HCT116 (cell line): ENCODE measurements at regions of chr15 and their contacts with region 1.

Region 1: DNA sequence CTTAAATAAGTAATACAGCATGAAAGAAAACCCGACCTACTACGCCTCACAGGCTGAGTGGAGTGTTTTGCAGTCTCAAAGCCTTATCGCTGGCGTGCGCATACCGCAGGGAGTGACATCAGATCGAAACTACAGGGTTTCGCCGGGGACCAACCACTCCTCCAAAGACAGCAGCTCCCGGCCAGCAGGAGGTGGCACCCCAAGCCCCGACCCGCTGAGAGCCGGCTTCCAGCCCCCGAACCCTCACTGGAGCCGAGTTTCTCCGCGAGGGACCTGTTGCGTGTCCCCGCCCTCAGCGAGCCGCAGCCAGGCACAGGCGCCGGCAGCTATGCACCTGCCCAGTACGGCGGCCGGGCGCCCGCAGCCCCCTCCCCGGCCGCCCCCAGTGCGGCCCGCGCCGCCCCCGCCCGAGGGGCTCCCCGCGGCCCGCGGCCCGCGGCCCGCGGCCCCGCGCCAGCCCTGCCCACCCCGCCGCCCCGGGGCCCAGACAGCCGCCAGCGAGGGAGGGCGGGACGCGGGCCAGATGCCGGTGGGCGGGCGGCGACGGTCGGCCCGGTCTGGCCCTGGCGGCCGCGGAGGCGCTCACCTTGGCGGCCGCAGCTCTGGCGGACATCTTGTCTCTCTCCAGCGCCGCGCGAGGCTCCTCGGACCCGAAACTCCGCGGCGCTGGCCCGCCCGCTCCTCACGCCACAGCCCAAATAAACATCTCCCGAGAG is 694 bp downstream of the TJP1 start:
- DNase-seq: peak; percentile 70
- ATAC-seq: peak; percentile 66
- H3K4me3 ChIP-seq: peak overlapping the region; percentile 63 to 79
- H3K27ac ChIP-seq: peak overlapping the region; percentile 93
- H3K4me1 ChIP-seq: peaks cover 16 to 31% of the 10 kb centered on the region in 2 experiments
- H3K27me3 ChIP-seq: no peaks in the 10 kb centered on the region
- CTCF ChIP-seq: peak in 1 of 3 experiments; percentile 12; a peak in 2 of 6 replicates
- POLR2A ChIP-seq: no peak
- RAD21 ChIP-seq: no peak

Region 2: GRCh38 chr15:29704950-29705597 is 116.5 kb before region 1 on chr15:
- CTCF ChIA-PET with region 1: no interaction called
- POLR2A ChIA-PET with region 1: no interaction called
- RAD21 ChIA-PET with region 1: no interaction called
- intact Hi-C with region 1: no loop called
- DNase-seq: no peak
- ATAC-seq: no peak
- H3K4me3 ChIP-seq: no peak overlapping the region
- H3K27ac ChIP-seq: no peak overlapping the region
- H3K4me1 ChIP-seq: no peaks in the 10 kb centered on the region
- H3K27me3 ChIP-seq: no peaks in the 10 kb centered on the region
- CTCF ChIP-seq: no peak
- POLR2A ChIP-seq: no peak
- RAD21 ChIP-seq: no peak

Region 3: DNA sequence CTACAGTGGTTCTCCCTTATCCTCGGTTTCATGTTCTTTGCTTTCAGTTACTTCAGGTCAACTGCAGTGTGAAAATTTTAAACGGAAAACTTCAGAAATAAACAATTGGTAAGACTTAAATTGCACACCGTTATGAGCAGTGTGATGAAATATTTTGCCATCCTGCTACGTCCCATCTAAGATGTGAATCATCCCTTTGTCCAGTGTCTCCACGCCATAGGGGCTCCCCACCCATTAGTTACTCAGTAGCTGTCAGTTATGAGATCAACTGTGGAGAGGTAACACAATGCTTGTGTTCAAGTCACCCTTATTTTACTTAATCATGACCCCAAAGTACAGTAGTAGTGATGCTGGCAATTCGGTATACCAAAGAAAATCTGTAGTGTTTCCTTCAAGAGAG is 46.7 kb before region 1 on chr15:
- CTCF ChIA-PET with region 1: no interaction called
- POLR2A ChIA-PET with region 1: no interaction called
- RAD21 ChIA-PET with region 1: no interaction called
- intact Hi-C with region 1: loop called (anchors 1 kb)
- DNase-seq: peak; percentile 54
- ATAC-seq: peak; percentile 79
- H3K4me3 ChIP-seq: no peak overlapping the region
- H3K27ac ChIP-seq: no peak overlapping the region
- H3K4me1 ChIP-seq: peaks cover 3 to 26% of the 10 kb centered on the region in 2 experiments; a peak in 3 of 4 replicates
- H3K27me3 ChIP-seq: no peaks in the 10 kb centered on the region
- CTCF ChIP-seq: no peak
- POLR2A ChIP-seq: no peak
- RAD21 ChIP-seq: no peak

Region 4: DNA sequence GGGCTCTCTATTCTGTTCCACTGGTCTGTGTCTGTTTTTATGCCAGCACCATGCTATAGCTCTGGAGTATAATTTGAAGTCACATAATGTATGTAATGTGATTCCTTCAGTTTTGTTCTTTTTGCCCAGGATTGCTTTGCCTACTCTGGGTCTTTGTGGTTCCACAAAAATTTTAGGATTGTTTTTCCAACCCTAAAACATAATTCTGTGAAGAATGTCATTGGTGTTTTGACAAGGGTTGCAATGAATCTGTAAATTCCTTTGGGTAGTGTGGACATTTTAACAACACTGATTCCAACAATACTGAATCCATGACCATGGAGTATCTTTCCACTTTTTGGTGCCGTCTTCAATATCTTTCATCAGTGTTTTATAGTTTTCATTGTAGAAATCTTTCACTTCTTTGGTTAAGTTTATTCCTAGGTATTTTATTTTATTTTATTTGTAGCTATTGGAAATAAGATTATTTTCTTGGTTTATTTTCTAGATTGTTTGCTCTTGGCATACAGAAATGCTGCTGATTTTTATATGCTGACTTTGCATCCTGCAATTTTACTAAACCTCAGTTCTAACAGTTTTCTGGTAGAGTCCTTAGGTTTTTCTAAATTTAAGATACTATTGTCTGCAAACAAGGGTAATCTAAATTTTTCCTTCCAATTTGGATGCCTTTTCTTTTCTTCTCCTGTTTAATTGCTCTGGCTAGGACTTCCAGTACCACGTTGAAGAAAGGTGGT is 29.0 kb before region 1 on chr15:
- CTCF ChIA-PET with region 1: no interaction called
- POLR2A ChIA-PET with region 1: no interaction called
- RAD21 ChIA-PET with region 1: no interaction called
- intact Hi-C with region 1: loop called (anchors 1 kb)
- DNase-seq: no peak
- ATAC-seq: no peak
- H3K4me3 ChIP-seq: no peak overlapping the region
- H3K27ac ChIP-seq: no peak overlapping the region
- H3K4me1 ChIP-seq: peaks cover 0 to 14% of the 10 kb centered on the region in 2 experiments; a peak in 2 of 4 replicates
- H3K27me3 ChIP-seq: no peaks in the 10 kb centered on the region
- CTCF ChIP-seq: no peak
- POLR2A ChIP-seq: no peak
- RAD21 ChIP-seq: no peak

Region 5: DNA sequence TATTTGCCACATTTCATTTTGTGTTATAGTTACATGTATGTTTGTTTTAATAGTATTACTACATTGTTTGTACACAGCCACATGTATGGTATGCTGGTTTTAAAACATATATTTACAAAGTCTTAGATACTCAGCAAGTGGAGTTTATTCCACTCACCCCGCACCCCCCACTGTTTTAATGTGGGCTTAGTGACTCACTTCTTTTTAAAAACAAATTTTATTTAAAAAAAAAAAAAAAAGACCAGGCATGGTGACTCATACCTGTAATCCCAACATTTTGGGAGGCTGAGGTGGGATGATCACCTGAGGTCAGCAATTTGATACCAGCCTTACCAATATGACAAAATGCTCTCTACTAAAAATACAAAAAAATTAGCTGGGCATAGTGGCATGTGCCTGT is 27.6 kb after region 1 on chr15:
- CTCF ChIA-PET with region 1: no interaction called
- POLR2A ChIA-PET with region 1: no interaction called
- RAD21 ChIA-PET with region 1: no interaction called
- intact Hi-C with region 1: loop called (anchors 2 kb)
- DNase-seq: no peak
- ATAC-seq: peak; percentile 21; the same call in 1 of the 2 replicates
- H3K4me3 ChIP-seq: no peak overlapping the region
- H3K27ac ChIP-seq: no peak overlapping the region
- H3K4me1 ChIP-seq: peaks cover 18 to 32% of the 10 kb centered on the region in 2 experiments
- H3K27me3 ChIP-seq: no peaks in the 10 kb centered on the region
- CTCF ChIP-seq: no peak
- POLR2A ChIP-seq: no peak
- RAD21 ChIP-seq: no peak